ENCODE measurements at regions of chr19 and their contacts with region 1.

Region 1: DNA sequence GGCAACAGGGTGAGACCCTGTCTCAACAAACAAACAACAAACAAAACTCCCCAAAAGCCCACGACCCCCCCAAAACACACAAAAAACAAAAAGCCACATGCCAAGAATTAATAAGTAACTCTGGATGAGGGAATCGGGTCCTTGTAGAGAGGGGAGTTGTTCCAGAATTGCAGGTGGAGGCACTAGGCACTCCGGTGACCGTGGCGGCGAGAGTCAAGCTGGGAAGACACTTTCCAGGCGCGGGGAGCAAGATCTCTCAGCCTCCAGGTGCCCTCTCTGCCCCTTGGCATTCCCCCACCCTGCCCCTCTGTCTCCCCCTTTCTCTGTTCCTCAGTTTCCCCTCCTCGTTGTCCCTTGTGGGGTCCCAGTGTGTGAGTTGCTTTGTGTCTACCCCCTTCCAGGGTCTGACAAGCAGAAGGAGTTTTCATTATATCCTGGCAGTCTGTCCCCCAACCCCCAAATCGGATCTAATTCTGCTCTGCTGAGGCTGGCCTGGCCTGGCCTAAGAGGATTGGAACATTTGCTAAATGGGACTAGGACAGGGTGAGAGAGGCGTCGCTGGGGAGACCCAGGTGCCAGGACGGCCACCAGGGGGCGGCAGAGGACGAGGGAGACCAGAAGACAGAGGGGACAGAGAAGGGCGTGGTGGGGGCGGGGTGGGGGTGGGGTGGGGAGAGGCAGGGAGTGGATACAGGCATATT is 8.3 kb upstream of the CRX start:
- DNase-seq: peak; percentile 78 to 99
- H3K4me3 ChIP-seq: no peak overlapping the region
- H3K27ac ChIP-seq: no peak overlapping the region
- H3K4me1 ChIP-seq: no peaks in the 10 kb centered on the region; a peak in 2 of 7 replicates
- H3K27me3 ChIP-seq: no peaks in the 10 kb centered on the region
- CTCF ChIP-seq: peak; percentile 70 to 91 (median 85)
- EP300 ChIP-seq: no peak
- POLR2A ChIP-seq: no peak
- RAD21 ChIP-seq: peak; percentile 68 to 78

Region 2: GRCh38 chr19:47758439-47758797 is 55.0 kb before region 1 on chr19:
- CTCF ChIA-PET with region 1: no interaction called
- POLR2A ChIA-PET with region 1: no interaction called
- DNase-seq: no peak
- H3K4me3 ChIP-seq: no peak overlapping the region
- H3K27ac ChIP-seq: no peak overlapping the region
- H3K4me1 ChIP-seq: no peaks in the 10 kb centered on the region
- H3K27me3 ChIP-seq: no peaks in the 10 kb centered on the region
- CTCF ChIP-seq: no peak
- EP300 ChIP-seq: no peak
- POLR2A ChIP-seq: no peak
- RAD21 ChIP-seq: no peak

Region 3: GRCh38 chr19:47839913-47840312 is 26.5 kb after region 1 on chr19:
- CTCF ChIA-PET with region 1: interaction called, 21 read pairs
- POLR2A ChIA-PET with region 1: no interaction called
- DNase-seq: no peak
- H3K4me3 ChIP-seq: no peak overlapping the region
- H3K27ac ChIP-seq: no peak overlapping the region
- H3K4me1 ChIP-seq: peaks cover 0 to 10% (median 4%) of the 10 kb centered on the region in 4 experiments; a peak in 3 of 7 replicates
- H3K27me3 ChIP-seq: no peaks in the 10 kb centered on the region
- CTCF ChIP-seq: no peak
- EP300 ChIP-seq: no peak
- POLR2A ChIP-seq: no peak
- RAD21 ChIP-seq: no peak

Region 4: DNA sequence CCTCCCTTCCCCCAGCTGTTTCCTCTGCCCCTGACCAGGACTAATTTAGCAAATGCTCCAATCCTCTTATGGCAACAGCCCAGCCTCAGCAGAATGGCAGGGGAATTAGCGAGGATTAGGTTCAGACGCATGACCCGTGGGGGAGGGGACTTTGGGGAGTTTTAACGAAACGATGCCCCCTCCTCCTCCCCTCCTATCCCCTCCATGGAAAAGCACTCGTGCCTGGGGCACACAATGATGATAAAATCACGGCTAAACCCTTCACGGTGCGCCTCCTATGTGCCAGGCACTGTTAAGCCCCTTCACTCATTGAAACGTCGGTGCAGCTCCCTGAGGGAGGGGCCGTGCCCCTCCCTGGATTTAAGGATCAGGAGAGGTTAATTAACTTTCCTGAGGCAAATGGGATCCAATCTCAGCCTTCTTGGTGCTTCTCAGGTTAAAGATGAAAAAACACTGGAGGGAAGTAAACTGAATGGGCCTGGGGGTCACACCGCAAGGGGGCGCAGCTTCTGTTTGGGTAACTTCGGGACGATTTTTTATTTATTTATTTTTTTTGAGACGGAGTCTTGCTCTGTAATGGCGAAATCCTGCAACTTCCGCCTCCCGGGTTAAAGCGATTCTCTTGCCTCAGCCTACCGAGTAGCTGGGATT is 35.5 kb after region 1 on chr19:
- CTCF ChIA-PET with region 1: interaction called, 21 read pairs
- POLR2A ChIA-PET with region 1: interaction called, 4 read pairs
- DNase-seq: peak; percentile 62 to 91
- H3K4me3 ChIP-seq: peak overlapping the region; percentile 26 to 52 (median 34); a peak in 7 of 8 replicates
- H3K27ac ChIP-seq: peak overlapping the region; percentile 83
- H3K4me1 ChIP-seq: peaks cover 5 to 12% (median 6%) of the 10 kb centered on the region in 4 experiments; a peak in 5 of 7 replicates
- H3K27me3 ChIP-seq: no peaks in the 10 kb centered on the region
- CTCF ChIP-seq: peak; percentile 60 to 63 (median 61); a peak in 3 of 4 replicates
- EP300 ChIP-seq: no peak
- POLR2A ChIP-seq: peak in 1 of 2 experiments; percentile 17; a peak in 1 of 3 replicates
- RAD21 ChIP-seq: peak in 1 of 2 experiments; percentile 42; a peak in 3 of 4 replicates